GM12878 (cell line): ENCODE measurements at regions of chr11 and their contacts with region 1.

Region 1: GRCh38 chr11:96112201-96113128 is 188.6 kb upstream of the MTMR2 start:
- DNase-seq: peak; percentile 58
- ATAC-seq: peak; percentile 96
- H3K4me3 ChIP-seq: no peak overlapping the region
- H3K27ac ChIP-seq: peak overlapping the region; percentile 76
- H3K4me1 ChIP-seq: peaks cover 32% of the 10 kb centered on the region
- H3K27me3 ChIP-seq: no peaks in the 10 kb centered on the region
- CTCF ChIP-seq: no peak
- EP300 ChIP-seq: peak; percentile 48 to 51; a peak in 2 of 4 replicates
- POLR2A ChIP-seq: no peak
- RAD21 ChIP-seq: peak; percentile 17; the same call in 1 of the 2 replicates

Region 2: DNA sequence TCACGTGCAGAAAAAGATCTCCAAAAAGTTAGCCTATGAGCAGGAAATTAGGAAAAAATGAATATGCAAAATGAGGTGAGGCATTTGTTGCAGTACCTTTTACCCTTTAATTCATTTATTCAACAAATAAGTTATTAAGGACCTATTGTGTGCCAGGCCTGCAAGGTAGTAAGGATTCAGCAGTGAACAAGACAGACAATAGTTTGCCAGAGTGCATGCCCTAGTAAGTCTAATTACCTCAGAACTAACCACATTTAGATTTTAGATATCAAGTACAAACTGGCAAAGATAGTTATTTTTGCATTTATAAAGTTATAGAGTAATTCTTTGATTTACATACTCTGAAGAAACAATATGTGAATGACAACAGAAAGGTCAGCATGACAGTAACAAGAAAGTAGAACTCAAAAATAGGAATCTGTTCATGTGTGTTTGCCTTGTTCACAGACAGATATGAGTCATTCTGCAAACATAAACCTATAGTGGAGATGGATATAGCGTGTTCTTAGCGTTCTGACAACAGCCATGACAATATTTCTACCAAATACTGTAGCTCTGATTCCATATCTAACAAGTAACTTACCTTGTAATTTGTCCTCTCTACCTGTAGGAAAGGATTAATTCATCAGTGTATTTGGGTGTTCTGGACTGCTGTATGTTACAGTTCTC is 19.8 kb after region 1 on chr11:
- CTCF ChIA-PET with region 1: interaction called, 3 read pairs
- POLR2A ChIA-PET with region 1: interaction called, 4 read pairs
- RAD21 ChIA-PET with region 1: interaction called, 4 read pairs
- SMC1A ChIA-PET with region 1: interaction called, 33 read pairs
- in situ Hi-C with region 1: no loop called
- intact Hi-C with region 1: no loop called
- DNase-seq: no peak
- ATAC-seq: peak; percentile 56
- H3K4me3 ChIP-seq: no peak overlapping the region
- H3K27ac ChIP-seq: no peak overlapping the region
- H3K4me1 ChIP-seq: peaks cover 13% of the 10 kb centered on the region; the same call in 1 of the 2 replicates
- H3K27me3 ChIP-seq: no peaks in the 10 kb centered on the region
- CTCF ChIP-seq: no peak
- EP300 ChIP-seq: no peak
- POLR2A ChIP-seq: no peak
- RAD21 ChIP-seq: no peak

Region 3: DNA sequence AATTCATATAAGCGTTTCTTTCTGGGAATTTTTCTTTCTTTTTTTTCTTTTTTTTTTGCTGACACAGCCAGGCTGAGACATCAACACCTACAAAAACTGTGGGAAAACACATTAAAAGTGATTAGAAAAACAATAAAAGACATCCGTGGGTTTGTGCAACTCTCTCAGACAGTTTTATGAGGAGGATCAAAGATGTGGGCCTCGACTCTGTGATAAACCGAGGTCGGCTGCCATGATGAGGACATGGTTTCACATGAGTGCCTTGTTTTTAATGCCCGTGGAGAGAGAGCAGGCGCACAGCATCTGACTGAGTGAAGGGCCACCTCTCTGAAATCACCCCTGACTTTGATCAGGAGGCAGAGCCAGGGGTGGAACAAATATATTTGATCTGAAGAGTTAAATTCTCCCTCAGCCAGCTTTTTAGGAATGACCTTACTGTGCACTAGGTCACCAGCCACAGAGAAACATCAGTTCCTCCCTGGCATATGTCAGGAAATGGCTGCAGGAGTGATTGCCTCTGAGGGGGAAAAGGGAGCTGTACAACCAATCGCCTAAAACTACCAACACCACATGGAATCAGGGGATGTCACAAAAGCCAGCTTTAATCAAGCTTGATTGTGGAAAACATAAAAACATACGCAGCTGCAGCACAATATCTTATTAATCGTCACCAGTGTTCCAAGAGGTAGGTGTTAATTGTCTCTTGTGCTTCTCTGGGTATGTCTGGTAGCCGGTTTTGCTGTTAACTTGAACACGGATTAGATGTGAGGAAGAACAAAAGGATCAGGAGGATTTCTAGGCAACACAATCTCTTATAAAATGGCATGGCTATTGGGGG is 65.8 kb after region 1 on chr11:
- CTCF ChIA-PET with region 1: no interaction called
- POLR2A ChIA-PET with region 1: no interaction called
- RAD21 ChIA-PET with region 1: no interaction called
- SMC1A ChIA-PET with region 1: no interaction called
- in situ Hi-C with region 1: no loop called
- intact Hi-C with region 1: no loop called
- DNase-seq: no peak
- ATAC-seq: no peak
- H3K4me3 ChIP-seq: no peak overlapping the region
- H3K27ac ChIP-seq: no peak overlapping the region
- H3K4me1 ChIP-seq: peaks cover 13% of the 10 kb centered on the region
- H3K27me3 ChIP-seq: no peaks in the 10 kb centered on the region
- CTCF ChIP-seq: no peak
- EP300 ChIP-seq: no peak
- POLR2A ChIP-seq: no peak
- RAD21 ChIP-seq: no peak